GM13977 (cell line): ENCODE measurements at regions of chr15 and their contacts with region 1.

Region 1: DNA sequence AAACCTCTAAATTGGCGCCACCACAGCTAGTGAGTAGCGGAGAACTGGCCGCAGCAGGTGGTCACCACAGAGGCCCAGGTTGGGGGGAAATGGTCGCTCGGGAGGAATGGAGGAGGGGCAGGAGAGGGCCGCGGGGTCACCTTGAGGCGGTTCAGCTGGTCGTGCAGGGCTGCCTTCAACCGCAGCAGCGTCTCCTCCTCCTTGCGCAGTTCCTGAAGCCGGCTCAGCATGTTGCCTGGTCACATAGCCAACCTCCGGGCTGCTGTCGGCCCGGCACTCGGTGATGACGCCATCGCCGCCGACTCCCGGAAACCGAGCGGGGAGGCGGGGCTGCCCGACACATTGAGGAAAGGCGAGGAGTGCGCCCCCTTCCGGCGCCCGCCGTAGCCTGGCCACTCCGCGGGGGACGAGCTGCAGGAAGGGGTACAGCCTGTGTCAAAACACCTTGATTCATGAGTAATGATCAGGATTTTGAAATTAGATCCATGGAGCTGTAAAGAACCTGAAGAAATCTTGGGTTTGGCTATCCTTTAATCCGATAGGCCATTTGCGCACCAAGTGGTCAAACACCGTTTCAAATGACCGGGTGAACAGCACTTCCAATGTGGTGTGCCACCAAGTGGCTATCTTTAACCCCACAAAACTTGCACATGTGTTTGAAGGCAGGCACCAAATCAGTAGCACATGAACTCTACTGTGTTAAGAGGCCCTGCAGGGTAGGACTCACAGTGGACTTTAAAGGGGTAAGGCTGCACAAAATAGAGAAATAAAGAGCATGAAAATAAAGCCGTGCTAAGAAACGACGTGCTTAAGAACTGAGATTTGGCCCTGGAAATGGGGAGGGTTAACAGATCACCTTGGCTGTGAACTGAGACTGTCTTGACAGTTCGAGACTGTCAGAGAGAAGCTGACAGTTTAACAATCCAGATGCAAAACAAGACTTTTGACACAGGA is at the start of gene SNAPC5:
- DNase-seq: peak; percentile 87
- CTCF ChIP-seq: peak; percentile 91

Region 2: GRCh38 chr15:66386204-66387123 is 111.3 kb before region 1 on chr15 and contains the start of gene MAP2K1:
- in situ Hi-C with region 1: loop called (anchors 10 kb)
- DNase-seq: peak; percentile 96
- CTCF ChIP-seq: peak; percentile 91

Region 3: DNA sequence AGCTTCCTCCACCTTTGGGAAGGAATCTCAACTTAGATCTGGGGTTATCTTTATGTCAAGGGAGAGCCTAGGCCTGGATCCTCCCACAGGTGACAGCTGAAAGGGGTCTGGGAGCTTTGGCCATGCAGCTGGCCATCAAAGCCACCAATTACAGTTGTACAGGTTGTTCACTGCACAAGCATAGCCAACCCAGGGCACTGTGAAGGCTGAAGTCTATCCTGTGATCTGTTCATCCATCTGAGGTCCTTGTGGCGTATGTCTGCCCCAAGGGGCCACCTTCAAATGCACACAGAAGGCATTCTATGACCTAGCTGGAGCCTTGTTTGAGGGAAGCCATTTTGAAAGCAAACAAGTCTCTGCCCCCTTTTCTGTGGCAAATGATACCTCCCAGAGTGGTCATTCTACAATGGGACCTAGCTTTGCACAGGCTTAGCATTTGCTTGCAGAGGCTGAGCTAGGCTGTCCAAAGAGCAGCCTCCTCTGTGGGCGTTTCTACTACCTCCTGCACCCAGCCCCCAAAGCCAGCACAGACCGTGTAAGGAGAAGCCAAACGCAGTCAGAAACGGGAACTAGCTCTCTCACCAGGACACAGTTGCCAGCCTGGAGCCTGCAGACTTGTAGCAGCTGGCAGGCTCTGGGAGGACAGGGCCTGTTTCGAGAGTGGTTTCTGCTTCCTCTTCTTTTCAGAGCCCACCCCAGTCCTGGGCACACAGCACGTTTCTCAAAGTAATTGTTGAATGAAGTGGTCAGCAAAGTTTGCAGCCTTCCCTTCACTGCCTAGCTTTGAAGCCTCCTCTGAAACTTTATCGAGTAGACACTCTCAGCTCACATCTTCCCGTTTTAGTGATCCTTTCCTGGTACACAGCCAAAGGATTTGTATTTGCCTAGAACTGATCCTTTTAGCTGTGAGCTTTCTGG is 410.3 kb after region 1 on chr15:
- in situ Hi-C with region 1: no loop called
- DNase-seq: no peak
- CTCF ChIP-seq: no peak